ENCODE measurements at regions of chr14 and their contacts with region 1.

Region 1: GRCh38 chr14:70359181-70360090 is at the start of gene COX16:
- DNase-seq: peak; percentile 63 to 92 (median 74)
- ATAC-seq: peak; percentile 95
- H3K4me3 ChIP-seq: peak within 1 kb of the TSS; percentile 74
- H3K4me3 Mint-ChIP-seq: peak within 1 kb of the TSS; percentile 97
- H3K27ac ChIP-seq: peak within 1 kb of the TSS; percentile 32 to 53
- H3K27ac Mint-ChIP-seq: peak within 1 kb of the TSS; percentile 91
- H3K4me1 ChIP-seq: peaks cover 21% of the 10 kb centered on the region
- H3K4me1 Mint-ChIP-seq: peaks cover 53% of the 10 kb centered on the region
- H3K27me3 ChIP-seq: no peaks in the 10 kb centered on the region
- H3K27me3 Mint-ChIP-seq: no peaks in the 10 kb centered on the region
- CTCF ChIP-seq: no peak
- total RNA-seq, gene COX16: 11.7 to 13.3 TPM

Region 2: GRCh38 chr14:70415788-70416187 is 56.4 kb after region 1 on chr14:
- CTCF ChIA-PET with region 1: no interaction called
- POLR2A ChIA-PET with region 1: interaction called, 4 read pairs
- intact Hi-C with region 1: loop called in 1 of 2 experiments (anchors 2 kb)
- DNase-seq: no peak
- ATAC-seq: no peak
- H3K4me3 ChIP-seq: peak overlapping the region; percentile 79
- H3K4me3 Mint-ChIP-seq: peak overlapping the region; percentile 92
- H3K27ac ChIP-seq: no peak overlapping the region
- H3K27ac Mint-ChIP-seq: peak overlapping the region; percentile 84
- H3K4me1 ChIP-seq: peaks cover 9% of the 10 kb centered on the region
- H3K4me1 Mint-ChIP-seq: peaks cover 50% of the 10 kb centered on the region
- H3K27me3 ChIP-seq: no peaks in the 10 kb centered on the region
- H3K27me3 Mint-ChIP-seq: peaks cover 5% of the 10 kb centered on the region
- CTCF ChIP-seq: no peak

Region 3: DNA sequence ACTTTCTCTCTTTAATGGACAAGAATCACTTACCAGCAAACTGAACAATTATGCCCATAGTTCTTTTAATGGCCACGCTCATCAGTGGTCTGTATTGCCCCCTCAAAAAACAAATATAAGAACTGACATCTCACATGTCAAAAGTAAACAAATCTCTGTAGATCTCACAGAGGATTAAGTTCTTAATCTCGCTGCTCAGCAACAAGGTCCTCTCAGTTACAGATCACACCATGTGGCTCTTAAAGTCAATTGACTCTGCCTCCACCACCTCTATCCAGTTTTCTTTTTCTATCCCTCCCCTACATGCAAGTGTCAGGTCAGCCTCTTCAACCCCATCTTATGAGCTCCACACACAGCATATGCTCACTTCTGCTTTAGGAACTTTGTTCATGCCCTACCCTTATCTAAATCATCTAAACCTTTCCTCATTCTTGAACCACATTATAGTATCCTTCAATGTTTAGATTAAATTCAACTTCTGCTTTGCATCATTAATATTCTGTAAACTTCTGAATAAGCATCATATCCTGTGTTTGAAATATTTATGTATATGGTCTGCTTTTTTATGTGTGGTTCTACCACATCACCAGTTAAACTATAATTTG is 168.2 kb after region 1 on chr14:
- CTCF ChIA-PET with region 1: no interaction called
- POLR2A ChIA-PET with region 1: no interaction called
- intact Hi-C with region 1: no loop called
- DNase-seq: no peak
- ATAC-seq: no peak
- H3K4me3 ChIP-seq: no peak overlapping the region
- H3K4me3 Mint-ChIP-seq: no peak overlapping the region
- H3K27ac ChIP-seq: no peak overlapping the region
- H3K27ac Mint-ChIP-seq: no peak overlapping the region
- H3K4me1 ChIP-seq: no peaks in the 10 kb centered on the region
- H3K4me1 Mint-ChIP-seq: no peaks in the 10 kb centered on the region
- H3K27me3 ChIP-seq: no peaks in the 10 kb centered on the region
- H3K27me3 Mint-ChIP-seq: no peaks in the 10 kb centered on the region
- CTCF ChIP-seq: no peak

Region 4: DNA sequence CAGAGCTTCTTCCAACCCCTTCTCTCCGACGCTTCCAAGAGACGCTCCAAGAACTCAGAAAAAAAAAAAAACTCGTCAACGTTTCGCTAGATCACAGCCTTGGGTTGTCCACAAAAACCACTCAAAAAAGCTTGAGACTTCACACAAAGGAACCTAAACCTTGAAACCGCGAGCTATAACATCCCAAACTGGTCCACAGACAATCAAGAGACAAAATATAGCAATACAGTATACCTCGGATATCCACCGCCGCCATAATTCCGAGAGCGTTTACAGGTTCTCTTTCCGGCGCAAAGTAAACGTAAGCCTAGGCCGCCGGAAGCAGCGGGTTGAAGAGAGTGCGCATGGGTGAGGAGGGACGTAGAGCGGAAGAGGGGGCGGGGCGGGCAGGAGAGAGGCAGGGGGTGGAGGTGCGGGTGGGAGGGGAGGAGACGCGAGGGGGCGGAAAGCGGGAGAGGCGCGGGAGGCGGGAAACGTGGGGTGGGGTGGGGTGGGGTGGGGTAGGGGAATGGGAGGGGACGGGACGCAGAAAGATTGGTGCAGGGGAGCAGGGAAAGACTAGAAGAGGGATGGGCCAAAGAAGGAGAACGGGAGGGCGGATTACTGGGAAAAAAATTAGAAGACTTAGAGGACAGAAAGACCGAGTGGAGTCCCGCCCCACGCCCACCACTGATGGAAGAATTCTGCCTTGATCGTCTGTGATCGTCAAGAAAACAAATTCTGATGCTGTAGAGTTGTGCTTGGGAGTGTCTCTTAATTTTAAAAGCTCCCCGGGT is 241.1 kb after region 1 on chr14 and contains the start of gene MED6:
- CTCF ChIA-PET with region 1: no interaction called
- POLR2A ChIA-PET with region 1: no interaction called
- intact Hi-C with region 1: loop called in 1 of 2 experiments (anchors 2 kb)
- DNase-seq: peak; percentile 83 to 97 (median 91)
- ATAC-seq: peak; percentile 99
- H3K4me3 ChIP-seq: peak within 1 kb of the TSS; percentile 97
- H3K4me3 Mint-ChIP-seq: peak within 1 kb of the TSS; percentile 100
- H3K27ac ChIP-seq: peak within 1 kb of the TSS; percentile 79 to 92
- H3K27ac Mint-ChIP-seq: peak within 1 kb of the TSS; percentile 99
- H3K4me1 ChIP-seq: peaks cover 15% of the 10 kb centered on the region
- H3K4me1 Mint-ChIP-seq: peaks cover 37% of the 10 kb centered on the region
- H3K27me3 ChIP-seq: no peaks in the 10 kb centered on the region
- H3K27me3 Mint-ChIP-seq: peaks cover 5% of the 10 kb centered on the region
- CTCF ChIP-seq: no peak
- total RNA-seq, gene MED6: 90.2 to 97.2 TPM

Measured in CD4-positive, alpha-beta T cell (primary cell).